ENCODE measurements at regions of chr11 and their contacts with region 1.

Region 1: GRCh38 chr11:65225279-65226102 is 36.3 kb upstream of the POLA2 start:
- DNase-seq: peak; percentile 77
- H3K27ac ChIP-seq: peak overlapping the region; percentile 90
- CTCF ChIP-seq: peak; percentile 75

Region 2: DNA sequence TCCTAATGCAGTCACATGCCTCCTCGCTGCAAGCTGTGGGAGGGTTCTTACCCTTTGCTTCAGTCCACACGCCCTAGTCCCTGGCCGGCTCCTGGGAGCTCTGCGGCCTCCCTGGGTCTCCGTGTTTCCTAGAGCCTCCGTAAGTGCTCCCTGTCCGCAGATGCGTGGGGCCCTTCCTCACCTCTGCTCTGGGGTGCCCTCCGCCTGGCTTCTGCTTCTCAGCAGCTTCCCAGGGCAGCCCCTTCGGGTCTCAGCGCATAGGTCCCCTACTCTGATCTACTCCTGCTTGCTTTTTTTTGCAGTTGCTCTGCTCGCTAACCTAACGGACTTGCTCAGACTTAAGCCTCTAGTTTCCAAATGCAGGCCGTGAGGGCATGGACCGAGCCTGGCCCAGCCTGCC is 21.3 kb before region 1 on chr11:
- CTCF ChIA-PET with region 1: no interaction called
- POLR2A ChIA-PET with region 1: no interaction called
- DNase-seq: no peak
- H3K27ac ChIP-seq: no peak overlapping the region; the same call in 1 of the 2 replicates
- CTCF ChIP-seq: no peak

Region 3: DNA sequence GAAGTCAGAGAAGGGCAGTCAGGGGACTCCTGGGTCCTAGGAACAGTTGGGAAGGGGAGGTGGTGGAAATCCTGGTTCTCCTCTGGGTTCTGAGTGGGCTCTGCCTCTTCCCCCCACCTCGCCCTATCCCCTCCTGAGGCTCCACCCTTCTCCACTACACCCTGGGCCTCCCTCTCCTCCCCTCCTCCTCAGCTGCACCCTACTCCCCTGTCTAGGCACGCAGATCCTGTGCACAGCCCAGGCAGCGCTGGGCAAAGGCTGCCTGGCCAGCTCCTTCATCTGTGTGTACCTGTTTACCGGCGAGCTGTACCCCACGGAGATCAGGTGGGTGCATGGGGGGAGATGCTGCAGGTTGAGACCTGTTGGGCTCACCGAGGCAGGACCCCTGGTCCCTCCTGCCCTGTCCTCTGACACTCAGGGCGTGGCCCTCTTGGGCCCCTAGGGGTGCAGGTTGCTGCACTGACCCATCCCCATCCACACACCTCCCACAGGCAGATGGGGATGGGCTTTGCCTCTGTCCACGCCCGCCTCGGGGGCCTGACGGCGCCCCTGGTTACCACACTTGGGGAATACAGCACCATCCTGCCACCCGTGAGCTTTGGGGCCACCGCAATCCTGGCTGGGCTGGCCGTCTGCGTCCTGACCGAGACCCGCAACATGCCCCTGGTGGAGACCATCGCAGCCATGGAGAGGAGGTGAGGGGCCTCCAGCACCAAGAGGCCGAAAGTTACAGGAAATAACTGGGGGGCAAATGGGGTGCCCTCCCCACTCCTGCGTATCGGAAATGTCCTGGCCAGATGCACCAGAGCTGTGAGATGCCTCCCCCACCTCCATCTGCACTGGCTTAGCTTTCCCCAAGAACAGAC is 10.9 kb after region 1 on chr11:
- CTCF ChIA-PET with region 1: interaction called, 11 read pairs
- POLR2A ChIA-PET with region 1: no interaction called
- DNase-seq: no peak
- H3K27ac ChIP-seq: no peak overlapping the region
- CTCF ChIP-seq: no peak

Region 4: GRCh38 chr11:65274735-65275682 is 49.5 kb after region 1 on chr11:
- CTCF ChIA-PET with region 1: interaction called, 10 read pairs
- POLR2A ChIA-PET with region 1: no interaction called
- DNase-seq: peak; percentile 67
- H3K27ac ChIP-seq: peak overlapping the region; percentile 60
- CTCF ChIP-seq: peak; percentile 77

Region 5: DNA sequence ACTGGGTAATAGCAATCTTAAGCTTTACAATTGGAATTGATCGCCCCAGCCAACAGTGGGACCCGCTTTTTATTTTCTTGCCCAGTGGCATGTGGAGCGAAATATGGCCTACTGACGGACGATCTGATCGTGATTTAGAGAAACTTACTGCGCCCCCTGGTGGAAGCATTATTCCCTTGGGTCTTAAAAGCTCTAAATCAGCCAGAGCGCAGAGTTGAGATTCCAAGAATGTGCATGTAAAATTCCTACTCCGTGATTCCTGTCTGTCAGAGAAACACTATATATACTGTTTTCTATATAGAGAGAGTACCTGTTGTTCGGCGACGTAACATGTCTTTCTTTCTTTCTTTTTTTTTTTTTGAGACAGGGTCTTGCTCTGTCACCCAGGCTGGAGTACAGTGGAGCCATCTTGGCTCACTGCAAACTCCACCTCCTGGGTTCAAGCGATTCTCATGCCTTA is 104.5 kb after region 1 on chr11:
- CTCF ChIA-PET with region 1: interaction called, 12 read pairs
- POLR2A ChIA-PET with region 1: no interaction called
- DNase-seq: peak; percentile 61
- H3K27ac ChIP-seq: peak overlapping the region; percentile 49
- CTCF ChIP-seq: peak; percentile 79

Region 6: GRCh38 chr11:65471410-65471762 is 245.9 kb after region 1 on chr11:
- CTCF ChIA-PET with region 1: no interaction called
- POLR2A ChIA-PET with region 1: no interaction called
- DNase-seq: no peak
- H3K27ac ChIP-seq: peak overlapping the region; percentile 95
- CTCF ChIP-seq: no peak